Vagina (tissue), 2 donors: ENCODE measurements at regions of chr1 and their contacts with region 1.

Region 1: DNA sequence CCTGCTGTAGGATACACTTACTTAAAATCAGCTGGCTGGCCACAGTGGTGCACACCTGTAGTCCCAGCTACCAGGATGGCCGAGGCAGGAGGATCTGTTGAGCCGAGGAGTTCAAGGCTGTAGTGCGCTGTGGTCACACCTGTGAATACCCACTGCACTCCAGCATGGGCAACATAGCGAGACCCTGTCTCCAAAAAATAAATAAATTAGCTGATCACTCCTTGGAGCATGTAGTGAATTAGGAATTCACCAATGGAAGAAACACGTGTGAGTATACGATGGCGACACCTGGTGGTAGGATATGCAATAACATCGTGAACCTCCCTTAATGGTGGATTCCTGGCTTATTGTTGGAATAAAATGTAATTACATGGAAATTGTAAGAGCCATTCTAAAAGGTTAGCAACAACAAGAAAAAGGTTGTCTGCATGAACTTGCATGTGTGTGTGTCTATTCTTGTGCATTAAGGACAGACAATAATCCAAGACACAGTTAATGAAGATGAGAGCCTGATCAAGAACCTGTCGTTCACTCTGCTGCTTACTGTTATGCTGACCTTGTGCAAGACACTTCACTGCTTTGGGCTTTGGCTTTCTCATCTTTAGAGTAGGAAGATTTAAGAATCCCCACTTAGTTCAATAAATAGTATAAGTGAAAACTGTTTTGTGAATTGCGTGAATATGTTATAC is 38.6 kb upstream of the COX20 start:
- DNase-seq: no peak
- H3K4me3 ChIP-seq: no peak overlapping the region
- H3K27ac ChIP-seq: no peak overlapping the region
- H3K4me1 ChIP-seq: no peaks in the 10 kb centered on the region
- H3K27me3 ChIP-seq: no peaks in the 10 kb centered on the region
- CTCF ChIP-seq: peak; percentile 81 to 95 (median 83)
- POLR2A ChIP-seq: no peak

Region 2: GRCh38 chr1:244603498-244603897 is 193.4 kb before region 1 on chr1:
- intact Hi-C with region 1: loop called (anchors 2 kb)
- DNase-seq: no peak
- H3K4me3 ChIP-seq: no peak overlapping the region
- H3K27ac ChIP-seq: no peak overlapping the region
- H3K4me1 ChIP-seq: no peaks in the 10 kb centered on the region
- H3K27me3 ChIP-seq: no peaks in the 10 kb centered on the region
- CTCF ChIP-seq: peak; percentile 63 to 88 (median 77)
- POLR2A ChIP-seq: no peak

Region 3: DNA sequence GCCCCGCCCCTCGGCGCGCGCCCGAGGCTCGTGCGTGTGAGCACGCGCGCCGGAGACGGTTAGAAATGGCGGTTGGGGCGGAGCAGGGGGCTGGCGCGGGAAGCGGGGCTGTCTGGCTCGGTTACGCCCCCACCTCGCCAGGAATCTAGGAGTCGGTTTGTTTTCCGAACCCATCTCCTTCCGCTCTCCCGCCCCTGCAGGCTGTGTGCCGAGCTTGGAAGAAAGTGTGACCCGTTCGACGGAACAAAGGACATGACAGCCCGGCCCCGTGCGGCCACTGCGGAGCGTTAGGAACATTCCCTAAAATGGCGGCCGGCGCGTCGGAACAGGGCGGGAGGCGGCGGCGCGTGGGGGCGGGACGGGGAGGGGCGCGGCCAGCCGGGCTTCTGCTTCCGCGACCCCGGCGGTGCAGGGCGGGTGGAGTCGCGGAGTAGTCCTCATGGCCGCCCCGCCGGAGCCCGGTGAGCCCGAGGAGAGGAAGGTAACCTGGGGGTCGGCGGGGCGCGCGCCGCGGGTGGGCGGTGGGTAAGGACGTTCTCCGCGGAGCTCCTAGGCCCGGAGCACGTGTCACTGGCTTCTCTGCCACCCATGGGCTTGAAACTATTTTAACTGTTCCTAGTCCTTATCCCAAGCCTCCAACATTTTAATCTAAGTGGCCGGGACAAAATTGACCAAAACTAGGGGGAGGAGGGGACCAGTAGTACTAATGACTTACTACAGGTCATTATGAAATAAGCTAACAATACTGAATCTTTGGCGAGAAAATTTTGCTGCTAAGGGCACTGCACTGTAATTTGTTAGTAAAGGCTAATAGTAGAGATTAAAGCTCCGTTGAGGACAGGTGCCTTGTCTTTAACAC is 38.6 kb after region 1 on chr1 and contains the start of gene COX20:
- intact Hi-C with region 1: no loop called
- DNase-seq: peak in 1 of 2 donors; percentile 94
- H3K4me3 ChIP-seq: peak within 1 kb of the TSS; percentile 85
- H3K27ac ChIP-seq: peak within 1 kb of the TSS; percentile 99
- H3K4me1 ChIP-seq: peaks cover 41% of the 10 kb centered on the region
- H3K27me3 ChIP-seq: no peaks in the 10 kb centered on the region
- CTCF ChIP-seq: no peak
- POLR2A ChIP-seq: peak in 1 of 2 donors; percentile 16
- total RNA-seq, gene COX20: 24.1 TPM

Region 4: GRCh38 chr1:244989813-244990212 is 193.0 kb after region 1 on chr1:
- intact Hi-C with region 1: no loop called
- DNase-seq: no peak
- H3K4me3 ChIP-seq: no peak overlapping the region
- H3K27ac ChIP-seq: no peak overlapping the region
- H3K4me1 ChIP-seq: no peaks in the 10 kb centered on the region
- H3K27me3 ChIP-seq: no peaks in the 10 kb centered on the region
- CTCF ChIP-seq: no peak
- POLR2A ChIP-seq: no peak

Region 5: GRCh38 chr1:245051349-245052221 is 254.7 kb after region 1 on chr1:
- intact Hi-C with region 1: loop called (anchors 2 kb)
- DNase-seq: no peak
- H3K4me3 ChIP-seq: no peak overlapping the region
- H3K27ac ChIP-seq: no peak overlapping the region
- H3K4me1 ChIP-seq: no peaks in the 10 kb centered on the region
- H3K27me3 ChIP-seq: no peaks in the 10 kb centered on the region
- CTCF ChIP-seq: no peak
- POLR2A ChIP-seq: no peak